ENCODE measurements at regions of chr5 and their contacts with region 1.

Region 1: GRCh38 chr5:177554474-177555111 is at the start of gene FAM193B:
- DNase-seq: peak; percentile 98
- total RNA-seq, gene FAM193B: 25.4 TPM

Region 2: DNA sequence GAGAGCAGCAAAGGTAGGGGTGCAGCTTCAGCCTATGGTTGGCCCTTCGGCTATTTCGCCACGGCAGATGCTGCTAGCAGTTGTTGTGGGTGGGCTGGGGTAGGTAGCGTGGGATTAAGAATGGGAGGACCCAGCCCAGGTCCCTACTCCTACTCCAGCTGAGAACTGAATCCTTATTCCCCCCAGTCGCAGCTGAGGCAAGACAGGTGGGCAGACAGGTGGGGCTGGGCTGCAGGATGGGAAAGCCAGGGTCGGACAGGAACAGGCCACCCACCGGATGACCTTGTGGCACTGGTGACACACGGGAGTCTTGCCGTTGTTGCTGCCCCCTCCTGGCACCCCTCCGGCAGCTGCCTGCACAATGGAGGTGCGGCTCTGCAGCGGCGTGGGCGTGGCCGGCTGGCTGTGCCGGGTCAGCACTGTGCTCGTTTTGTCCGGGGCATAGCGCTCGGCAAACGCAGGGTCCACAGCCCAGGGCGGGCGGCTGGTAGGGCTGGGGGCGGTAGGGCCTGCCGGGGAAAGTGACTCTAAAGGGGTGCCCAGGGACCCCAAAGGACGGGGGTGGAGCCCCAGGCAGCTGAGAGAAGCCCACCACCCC is 65.4 kb before region 1 on chr5:
- intact Hi-C with region 1: no loop called
- DNase-seq: no peak

Region 3: GRCh38 chr5:177592010-177592834 is 37.6 kb after region 1 on chr5 and contains the start of gene TMED9:
- intact Hi-C with region 1: loop called (anchors 5 kb)
- DNase-seq: peak; percentile 96
- total RNA-seq, gene TMED9: 94.9 TPM